Heart right ventricle (tissue), 16 donors: ENCODE measurements at regions of chr14 and their contacts with region 1.

Region 1: GRCh38 chr14:72904840-72905561 is 11.1 kb upstream of the DPF3 start:
- DNase-seq: peak in 1 of 2 donors; percentile 59
- ATAC-seq: peak; percentile 15 to 74 (median 61)
- H3K4me3 ChIP-seq: no peak overlapping the region
- H3K27ac ChIP-seq: no peak overlapping the region
- H3K4me1 ChIP-seq: peaks cover 3 to 34% (median 11%) of the 10 kb centered on the region in 9 donors
- H3K27me3 ChIP-seq: peaks cover 0 to 6% (median 0%) of the 10 kb centered on the region in 7 donors
- CTCF ChIP-seq: peak; percentile 76 to 95 (median 92)

Region 2: GRCh38 chr14:72516936-72517700 is 387.9 kb before region 1 on chr14:
- intact Hi-C with region 1: loop called (anchors 1 to 5 kb)
- DNase-seq: peak; percentile 44 to 57
- ATAC-seq: peak; percentile 55 to 79 (median 74)
- H3K4me3 ChIP-seq: no peak overlapping the region
- H3K27ac ChIP-seq: no peak overlapping the region
- H3K4me1 ChIP-seq: peaks cover 0 to 29% (median 0%) of the 10 kb centered on the region in 9 donors
- H3K27me3 ChIP-seq: no peaks in the 10 kb centered on the region
- CTCF ChIP-seq: peak; percentile 83 to 96 (median 91)

Region 3: DNA sequence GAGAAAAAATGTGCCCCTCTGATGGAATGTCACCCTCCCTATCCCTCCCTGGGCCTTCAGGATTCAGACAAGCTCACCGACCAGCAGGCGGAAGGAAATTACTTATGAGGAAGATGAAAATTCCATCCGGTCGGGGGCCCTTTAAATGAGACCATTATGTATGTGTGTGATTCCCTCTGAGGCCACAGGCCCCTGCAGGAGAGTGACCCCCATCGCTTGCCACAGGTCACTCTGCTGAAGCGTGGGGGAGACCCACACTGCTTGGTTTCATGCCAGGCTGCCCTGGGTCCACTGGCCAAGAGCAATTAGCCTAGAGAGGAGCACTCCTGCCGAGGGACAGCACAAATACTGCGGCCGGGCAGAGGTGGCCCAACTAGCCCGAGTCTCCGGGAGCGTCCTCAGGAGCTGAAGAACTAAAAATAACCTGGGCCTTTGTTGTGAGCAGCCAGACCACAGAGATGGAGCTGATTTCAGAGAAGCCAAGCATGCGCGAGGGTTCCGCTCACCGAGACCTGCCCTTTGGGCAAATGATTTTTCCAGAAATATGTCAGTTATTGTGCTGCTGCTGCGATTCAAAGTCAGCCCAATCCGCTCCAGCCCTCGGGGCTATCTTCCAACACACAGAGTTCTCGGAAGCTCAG is 287.5 kb before region 1 on chr14:
- intact Hi-C with region 1: loop called in 4 of 10 experiments (anchors 5 to 10 kb)
- DNase-seq: peak; percentile 38 to 67
- ATAC-seq: peak; percentile 50 to 75 (median 65)
- H3K4me3 ChIP-seq: peak overlapping the region in 4 of 10 donors; percentile 8 to 22 (median 15)
- H3K27ac ChIP-seq: peak overlapping the region; percentile 15 to 91 (median 86)
- H3K4me1 ChIP-seq: peaks cover 37 to 75% (median 72%) of the 10 kb centered on the region in 9 donors
- H3K27me3 ChIP-seq: no peaks in the 10 kb centered on the region
- CTCF ChIP-seq: no peak

Region 4: GRCh38 chr14:72643317-72643801 is 261.6 kb before region 1 on chr14:
- intact Hi-C with region 1: no loop called
- DNase-seq: peak in 1 of 2 donors; percentile 29
- ATAC-seq: peak; percentile 52 to 93 (median 76)
- H3K4me3 ChIP-seq: no peak overlapping the region
- H3K27ac ChIP-seq: peak overlapping the region in 1 of 10 donors; percentile 68
- H3K4me1 ChIP-seq: peaks cover 0 to 23% (median 14%) of the 10 kb centered on the region in 9 donors
- H3K27me3 ChIP-seq: no peaks in the 10 kb centered on the region
- CTCF ChIP-seq: peak in 1 of 9 donors; percentile 11

Region 5: DNA sequence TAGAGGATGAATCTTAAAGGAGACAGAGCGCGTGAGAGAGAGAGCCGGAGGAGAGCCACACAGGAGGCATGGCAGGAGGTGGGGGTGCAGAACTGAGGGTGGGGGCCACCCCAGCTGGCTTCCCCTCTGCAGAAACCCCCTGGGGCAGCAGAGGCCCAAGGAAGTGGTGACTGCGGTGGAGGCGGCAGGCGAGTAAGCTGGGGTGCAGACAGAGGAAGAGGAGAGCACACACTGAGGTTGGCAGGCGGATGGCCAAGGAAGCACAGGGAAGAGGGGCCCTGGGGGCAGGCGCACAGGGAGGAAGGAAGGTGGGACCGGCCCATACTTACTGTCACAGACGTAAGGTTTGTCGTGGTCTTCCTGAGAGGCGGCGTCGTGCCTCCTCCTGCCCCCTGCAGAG is 190.9 kb before region 1 on chr14:
- intact Hi-C with region 1: loop called in 2 of 10 experiments (anchors 10 kb)
- DNase-seq: no peak
- ATAC-seq: no peak
- H3K4me3 ChIP-seq: peak overlapping the region in 1 of 10 donors; percentile 9
- H3K27ac ChIP-seq: peak overlapping the region in 9 of 10 donors; percentile 68 to 93 (median 71)
- H3K4me1 ChIP-seq: peaks cover 10 to 56% (median 40%) of the 10 kb centered on the region in 9 donors
- H3K27me3 ChIP-seq: no peaks in the 10 kb centered on the region
- CTCF ChIP-seq: no peak

Region 6: GRCh38 chr14:72736314-72736715 is 168.7 kb before region 1 on chr14:
- intact Hi-C with region 1: loop called in 2 of 10 experiments (anchors 10 kb)
- DNase-seq: no peak
- ATAC-seq: peak in 4 of 8 donors; percentile 18 to 56 (median 34)
- H3K4me3 ChIP-seq: no peak overlapping the region
- H3K27ac ChIP-seq: no peak overlapping the region
- H3K4me1 ChIP-seq: peaks cover 0 to 37% (median 3%) of the 10 kb centered on the region in 9 donors
- H3K27me3 ChIP-seq: no peaks in the 10 kb centered on the region
- CTCF ChIP-seq: peak in 3 of 9 donors; percentile 7 to 35 (median 17)

Region 7: GRCh38 chr14:72745991-72746980 is 158.7 kb before region 1 on chr14:
- intact Hi-C with region 1: loop called in 1 of 10 experiments (anchors 10 kb)
- DNase-seq: no peak
- ATAC-seq: peak in 2 of 8 donors; percentile 18 to 21
- H3K4me3 ChIP-seq: no peak overlapping the region
- H3K27ac ChIP-seq: no peak overlapping the region
- H3K4me1 ChIP-seq: peaks cover 2 to 43% (median 10%) of the 10 kb centered on the region in 9 donors
- H3K27me3 ChIP-seq: no peaks in the 10 kb centered on the region
- CTCF ChIP-seq: peak in 1 of 9 donors; percentile 4

Region 8: GRCh38 chr14:72822946-72823611 is 81.9 kb before region 1 on chr14:
- intact Hi-C with region 1: no loop called
- DNase-seq: peak; percentile 41 to 78
- ATAC-seq: peak; percentile 73 to 94 (median 86)
- H3K4me3 ChIP-seq: no peak overlapping the region
- H3K27ac ChIP-seq: peak overlapping the region; percentile 1 to 82 (median 73)
- H3K4me1 ChIP-seq: peaks cover 0 to 33% (median 10%) of the 10 kb centered on the region in 9 donors
- H3K27me3 ChIP-seq: no peaks in the 10 kb centered on the region
- CTCF ChIP-seq: no peak